Transverse colon (tissue), 4 donors: ENCODE measurements at regions of chr5 and their contacts with region 1.

Region 1: GRCh38 chr5:18393589-18394442 is 759.6 kb downstream of the TAF11L14 start:
- DNase-seq: peak; percentile 63
- H3K4me3 ChIP-seq: no peak overlapping the region
- H3K27ac ChIP-seq: no peak overlapping the region
- H3K4me1 ChIP-seq: peaks cover 0 to 18% (median 0%) of the 10 kb centered on the region in 4 donors
- H3K27me3 ChIP-seq: no peaks in the 10 kb centered on the region
- CTCF ChIP-seq: peak; percentile 63 to 79 (median 73)
- EP300 ChIP-seq: no peak
- POLR2A ChIP-seq: no peak

Region 2: GRCh38 chr5:18699681-18700080 is 305.9 kb after region 1 on chr5:
- in situ Hi-C with region 1: loop called in 3 of 4 experiments (anchors 10 kb)
- intact Hi-C with region 1: no loop called
- DNase-seq: no peak
- H3K4me3 ChIP-seq: no peak overlapping the region
- H3K27ac ChIP-seq: no peak overlapping the region
- H3K4me1 ChIP-seq: peaks cover 0 to 6% (median 0%) of the 10 kb centered on the region in 4 donors
- H3K27me3 ChIP-seq: no peaks in the 10 kb centered on the region
- CTCF ChIP-seq: no peak
- EP300 ChIP-seq: no peak
- POLR2A ChIP-seq: no peak